ENCODE measurements at regions of chr21 and their contacts with region 1.

Region 1: GRCh38 chr21:41068967-41069642 is 98.9 kb upstream of the BACE2 start:
- DNase-seq: peak; percentile 2 to 71 (median 40)
- ATAC-seq: peak; percentile 74
- H3K4me3 ChIP-seq: peak overlapping the region; percentile 25
- H3K4me3 Mint-ChIP-seq: peak overlapping the region; percentile 40 to 81 (median 70)
- H3K27ac ChIP-seq: no peak overlapping the region
- H3K27ac Mint-ChIP-seq: no peak overlapping the region
- H3K4me1 ChIP-seq: peaks cover 0 to 4% of the 10 kb centered on the region in 2 donors
- H3K4me1 Mint-ChIP-seq: peaks cover 5 to 14% (median 11%) of the 10 kb centered on the region in 7 donors
- H3K27me3 ChIP-seq: no peaks in the 10 kb centered on the region
- H3K27me3 Mint-ChIP-seq: peaks cover 23 to 52% (median 30%) of the 10 kb centered on the region in 5 donors

Region 2: GRCh38 chr21:40143822-40144525 is 925.1 kb before region 1 on chr21:
- CTCF ChIA-PET with region 1: no interaction called
- POLR2A ChIA-PET with region 1: no interaction called
- intact Hi-C with region 1: loop called in 1 of 2 experiments (anchors 10 kb)
- DNase-seq: peak in 5 of 9 donors; percentile 2 to 24 (median 10)
- ATAC-seq: no peak
- H3K4me3 ChIP-seq: no peak overlapping the region
- H3K4me3 Mint-ChIP-seq: no peak overlapping the region
- H3K27ac ChIP-seq: no peak overlapping the region
- H3K27ac Mint-ChIP-seq: no peak overlapping the region
- H3K4me1 ChIP-seq: no peaks in the 10 kb centered on the region
- H3K4me1 Mint-ChIP-seq: no peaks in the 10 kb centered on the region
- H3K27me3 ChIP-seq: no peaks in the 10 kb centered on the region
- H3K27me3 Mint-ChIP-seq: no peaks in the 10 kb centered on the region

Region 3: GRCh38 chr21:40466893-40467501 is 602.1 kb before region 1 on chr21:
- CTCF ChIA-PET with region 1: no interaction called
- POLR2A ChIA-PET with region 1: no interaction called
- intact Hi-C with region 1: loop called (anchors 5 to 10 kb)
- DNase-seq: no peak
- ATAC-seq: no peak
- H3K4me3 ChIP-seq: no peak overlapping the region
- H3K4me3 Mint-ChIP-seq: no peak overlapping the region
- H3K27ac ChIP-seq: no peak overlapping the region
- H3K27ac Mint-ChIP-seq: no peak overlapping the region
- H3K4me1 ChIP-seq: no peaks in the 10 kb centered on the region
- H3K4me1 Mint-ChIP-seq: no peaks in the 10 kb centered on the region
- H3K27me3 ChIP-seq: no peaks in the 10 kb centered on the region
- H3K27me3 Mint-ChIP-seq: peaks cover 0 to 28% (median 5%) of the 10 kb centered on the region in 5 donors

Region 4: GRCh38 chr21:41196636-41197389 is 127.7 kb after region 1 on chr21:
- CTCF ChIA-PET with region 1: no interaction called
- POLR2A ChIA-PET with region 1: no interaction called
- intact Hi-C with region 1: no loop called
- DNase-seq: no peak
- ATAC-seq: no peak
- H3K4me3 ChIP-seq: no peak overlapping the region
- H3K4me3 Mint-ChIP-seq: no peak overlapping the region
- H3K27ac ChIP-seq: no peak overlapping the region
- H3K27ac Mint-ChIP-seq: no peak overlapping the region
- H3K4me1 ChIP-seq: no peaks in the 10 kb centered on the region
- H3K4me1 Mint-ChIP-seq: peaks cover 0 to 3% (median 0%) of the 10 kb centered on the region in 7 donors
- H3K27me3 ChIP-seq: no peaks in the 10 kb centered on the region
- H3K27me3 Mint-ChIP-seq: peaks cover 3 to 14% (median 10%) of the 10 kb centered on the region in 5 donors

Measured in naive thymus-derived CD4-positive, alpha-beta T cell (primary cell).